ENCODE measurements at regions of chr17 and their contacts with region 1.

Region 1: DNA sequence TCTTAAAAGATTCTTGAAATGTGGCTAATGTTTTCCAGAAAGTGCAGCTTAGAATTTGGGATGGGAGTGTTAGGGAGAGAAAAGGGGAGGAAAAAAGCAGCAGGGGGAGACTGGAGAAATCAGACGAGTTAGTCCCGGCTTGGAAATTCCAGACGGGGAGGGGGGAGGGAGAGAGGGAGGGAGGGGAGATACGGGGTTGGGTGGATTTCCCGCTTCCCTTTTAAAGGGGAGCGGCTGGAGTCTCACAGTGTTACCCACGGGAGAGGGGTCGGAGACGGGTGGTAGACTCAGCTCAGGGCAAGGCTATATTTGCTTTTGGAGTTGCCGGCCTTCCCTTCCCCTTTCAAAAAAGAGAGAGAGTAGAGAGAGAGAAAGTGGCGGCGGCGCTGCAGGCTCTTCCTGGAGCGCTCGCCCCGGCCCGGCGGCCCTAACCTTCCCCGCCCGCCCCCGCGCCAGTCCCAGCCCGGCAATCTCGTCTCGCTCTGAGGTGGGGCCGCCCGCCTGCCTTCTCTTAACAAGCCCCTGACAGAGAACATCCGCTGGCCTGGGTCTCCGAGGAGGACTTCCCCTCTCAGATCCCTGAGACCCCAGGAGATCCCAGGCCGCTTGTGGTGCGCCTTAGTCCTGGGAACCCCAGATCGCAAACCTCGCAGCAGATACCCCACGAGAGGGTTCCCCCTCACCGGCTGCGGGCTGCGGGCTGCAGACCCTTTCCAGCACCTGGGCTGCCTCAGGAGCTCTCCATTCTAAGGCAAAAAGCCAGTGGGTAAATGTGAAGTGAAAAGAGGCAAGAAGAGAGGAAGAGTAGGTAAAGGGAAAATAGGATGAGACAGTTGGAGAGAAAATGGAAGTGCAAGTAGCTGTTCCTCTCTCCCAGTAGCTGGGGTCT is 6.7 kb downstream of the IGF2BP1 start:
- DNase-seq: no peak

Region 2: DNA sequence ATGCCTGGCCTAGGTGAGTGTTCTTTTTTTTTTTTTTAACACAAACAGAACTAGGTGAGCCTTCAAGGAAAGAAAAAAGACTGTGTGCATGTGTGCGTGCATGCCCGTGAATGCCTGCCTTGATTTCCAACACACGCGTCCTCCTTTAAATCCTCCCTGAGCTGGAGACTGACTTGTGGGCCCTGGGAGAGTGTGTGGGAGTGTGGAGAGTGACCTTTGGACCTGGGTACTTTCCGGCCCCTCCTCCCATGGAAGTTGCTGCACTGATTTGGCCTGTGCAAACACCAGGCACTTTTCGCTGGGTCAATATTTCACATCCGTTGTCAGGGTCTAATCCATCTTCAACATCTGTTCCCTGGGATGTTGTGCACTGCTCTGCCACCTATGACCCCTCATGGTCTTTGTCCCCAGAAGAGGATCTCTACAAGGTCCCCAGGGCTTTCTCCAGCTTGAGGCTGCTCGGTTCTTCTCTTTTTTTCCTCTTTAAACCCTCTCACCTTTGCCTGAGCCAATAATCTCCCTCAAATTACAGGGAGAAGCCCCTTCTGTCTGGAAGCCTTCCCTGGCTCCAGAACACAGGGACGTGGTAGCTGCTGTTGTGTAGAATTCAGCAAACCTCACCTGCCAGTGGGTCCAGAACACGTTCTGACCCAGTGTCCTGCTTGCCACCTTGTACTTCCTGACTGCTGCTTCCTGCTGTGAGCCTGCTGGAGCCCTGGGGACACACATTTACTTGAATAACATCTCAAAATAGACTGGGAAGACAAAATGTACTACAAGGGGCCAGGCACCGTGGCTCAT is 132.1 kb before region 1 on chr17:
- intact Hi-C with region 1: no loop called
- DNase-seq: no peak

Region 3: DNA sequence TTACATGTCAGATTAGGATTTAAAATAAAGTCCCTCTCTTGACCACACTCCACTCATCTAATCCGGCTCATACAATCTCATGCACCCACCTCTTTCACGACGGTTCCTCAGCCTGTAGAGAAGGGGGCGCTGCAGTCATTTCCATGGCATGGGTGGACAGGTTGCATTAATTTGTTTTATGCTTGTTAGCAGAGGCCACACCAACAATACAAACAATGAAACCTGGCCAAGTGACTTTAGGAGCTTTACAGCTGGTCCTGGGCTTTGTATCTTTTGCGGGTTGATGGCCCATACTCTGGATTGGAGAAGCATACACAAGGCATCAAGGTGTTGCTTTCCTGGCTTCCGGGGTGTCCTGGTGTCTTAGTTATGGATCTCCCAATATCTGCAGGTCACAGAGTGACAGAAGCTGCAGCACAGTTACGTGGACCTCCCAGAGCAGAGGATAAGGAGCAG is 49.5 kb before region 1 on chr17:
- intact Hi-C with region 1: loop called in 1 of 2 experiments (anchors 1 kb)
- DNase-seq: no peak

Region 4: DNA sequence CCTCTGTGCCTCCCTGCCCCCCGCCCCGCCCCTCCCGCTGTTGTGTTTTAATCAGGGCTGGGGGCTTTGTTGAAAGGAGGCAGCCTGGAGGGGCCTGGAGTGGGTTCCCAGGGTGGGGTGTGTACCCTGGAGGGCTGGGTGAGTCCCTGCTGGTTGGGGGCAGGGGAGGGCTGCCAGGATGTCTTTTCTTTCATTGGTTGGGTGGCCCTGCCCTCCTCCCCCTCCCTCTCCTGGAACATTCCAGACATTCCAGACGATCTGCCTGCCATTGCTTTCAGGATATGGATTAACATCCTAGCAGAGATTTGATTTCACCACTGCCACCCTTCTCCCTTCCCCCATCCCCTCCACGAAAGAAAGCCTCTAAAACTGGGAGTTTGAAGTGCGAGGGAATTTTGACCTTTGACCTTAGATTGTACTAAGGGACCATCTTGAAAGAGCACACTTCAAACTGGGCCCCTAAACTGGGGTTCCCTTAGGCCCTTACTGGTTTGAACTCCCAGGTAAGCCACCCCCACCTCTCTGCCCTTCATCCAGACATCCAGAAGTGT is 18.6 kb after region 1 on chr17:
- intact Hi-C with region 1: no loop called
- DNase-seq: no peak

Region 5: DNA sequence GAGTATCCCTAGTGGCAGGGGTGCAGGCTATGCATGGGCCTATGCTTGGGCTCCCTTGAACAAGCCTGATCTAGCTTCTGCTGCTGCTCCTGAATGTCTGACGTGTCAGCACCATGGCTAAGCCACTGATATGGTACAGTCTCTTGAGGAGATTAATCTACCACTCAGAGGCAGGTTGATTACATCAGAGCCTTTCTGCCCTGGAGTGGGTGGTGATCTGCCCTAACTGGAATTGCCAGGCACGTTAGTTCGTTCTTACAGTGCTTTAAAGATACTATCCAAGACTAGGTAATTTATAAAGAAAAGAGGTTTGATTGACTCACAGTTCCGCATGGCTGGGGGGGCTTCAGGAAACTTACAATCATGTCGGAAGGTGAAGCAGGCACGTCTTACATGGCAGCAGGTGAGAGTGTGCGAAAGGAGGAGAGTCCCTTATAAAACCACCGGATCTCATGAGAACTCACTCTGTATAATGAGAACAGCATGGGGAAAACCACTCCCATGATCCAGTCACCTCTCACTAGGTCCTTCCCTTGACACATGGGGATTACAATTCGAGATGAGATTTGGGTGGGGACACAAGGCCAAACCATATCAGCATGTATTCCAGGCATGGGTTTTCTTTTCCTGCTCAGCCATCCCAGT is 87.2 kb after region 1 on chr17:
- intact Hi-C with region 1: no loop called
- DNase-seq: no peak

Measured in posterior vena cava (tissue), 2 donors.